Dendritic cell treated with granulocyte-macrophage colony-stimulating factor and Interleukin-4, amounts not matched to agents 40 ng/mL and 50 ng/mL, for 4 days (primary cell): ENCODE measurements at regions of chr12 and their contacts with region 1.

Region 1: GRCh38 chr12:25151476-25151875 is 43.5 kb downstream of the DNAI7 start:
- H3K4me3 Mint-ChIP-seq: no peak overlapping the region
- H3K27ac Mint-ChIP-seq: no peak overlapping the region
- H3K4me1 Mint-ChIP-seq: peaks cover 5% of the 10 kb centered on the region
- H3K27me3 Mint-ChIP-seq: peaks cover 1% of the 10 kb centered on the region

Region 2: GRCh38 chr12:24280056-24280842 is 871.2 kb before region 1 on chr12:
- intact Hi-C with region 1: loop called (anchors 5 kb)
- H3K4me3 Mint-ChIP-seq: no peak overlapping the region
- H3K27ac Mint-ChIP-seq: no peak overlapping the region
- H3K4me1 Mint-ChIP-seq: no peaks in the 10 kb centered on the region
- H3K27me3 Mint-ChIP-seq: no peaks in the 10 kb centered on the region

Region 3: GRCh38 chr12:24861766-24862575 is 289.5 kb before region 1 on chr12:
- intact Hi-C with region 1: no loop called
- H3K4me3 Mint-ChIP-seq: no peak overlapping the region
- H3K27ac Mint-ChIP-seq: no peak overlapping the region
- H3K4me1 Mint-ChIP-seq: peaks cover 5% of the 10 kb centered on the region
- H3K27me3 Mint-ChIP-seq: no peaks in the 10 kb centered on the region

Region 4: GRCh38 chr12:25130741-25131188 is 20.7 kb before region 1 on chr12:
- intact Hi-C with region 1: no loop called
- H3K4me3 Mint-ChIP-seq: no peak overlapping the region
- H3K27ac Mint-ChIP-seq: no peak overlapping the region
- H3K4me1 Mint-ChIP-seq: peaks cover 10% of the 10 kb centered on the region
- H3K27me3 Mint-ChIP-seq: no peaks in the 10 kb centered on the region